ENCODE measurements at regions of chr6 and their contacts with region 1.

Region 1: GRCh38 chr6:125314019-125314581 is 12.3 kb upstream of the HDDC2 start:
- DNase-seq: peak in 1 of 2 donors; percentile 67
- ATAC-seq: peak; percentile 59 to 68 (median 67)
- H3K4me3 ChIP-seq: no peak overlapping the region
- H3K4me3 Mint-ChIP-seq: no peak overlapping the region
- H3K27ac ChIP-seq: no peak overlapping the region
- H3K27ac Mint-ChIP-seq: no peak overlapping the region
- H3K4me1 ChIP-seq: no peaks in the 10 kb centered on the region
- H3K4me1 Mint-ChIP-seq: peaks cover 0 to 4% of the 10 kb centered on the region in 2 donors
- H3K27me3 ChIP-seq: no peaks in the 10 kb centered on the region
- H3K27me3 Mint-ChIP-seq: peaks cover 10 to 20% of the 10 kb centered on the region in 2 donors
- CTCF ChIP-seq: peak; percentile 50

Region 2: GRCh38 chr6:125066964-125067363 is 247.1 kb before region 1 on chr6:
- intact Hi-C with region 1: no loop called
- DNase-seq: peak in 1 of 2 donors; percentile 61
- ATAC-seq: peak; percentile 81 to 99 (median 82)
- H3K4me3 ChIP-seq: no peak overlapping the region
- H3K4me3 Mint-ChIP-seq: no peak overlapping the region
- H3K27ac ChIP-seq: no peak overlapping the region
- H3K27ac Mint-ChIP-seq: no peak overlapping the region
- H3K4me1 ChIP-seq: peaks cover 11% of the 10 kb centered on the region
- H3K4me1 Mint-ChIP-seq: no peaks in the 10 kb centered on the region
- H3K27me3 ChIP-seq: no peaks in the 10 kb centered on the region
- H3K27me3 Mint-ChIP-seq: no peaks in the 10 kb centered on the region
- CTCF ChIP-seq: no peak

Region 3: DNA sequence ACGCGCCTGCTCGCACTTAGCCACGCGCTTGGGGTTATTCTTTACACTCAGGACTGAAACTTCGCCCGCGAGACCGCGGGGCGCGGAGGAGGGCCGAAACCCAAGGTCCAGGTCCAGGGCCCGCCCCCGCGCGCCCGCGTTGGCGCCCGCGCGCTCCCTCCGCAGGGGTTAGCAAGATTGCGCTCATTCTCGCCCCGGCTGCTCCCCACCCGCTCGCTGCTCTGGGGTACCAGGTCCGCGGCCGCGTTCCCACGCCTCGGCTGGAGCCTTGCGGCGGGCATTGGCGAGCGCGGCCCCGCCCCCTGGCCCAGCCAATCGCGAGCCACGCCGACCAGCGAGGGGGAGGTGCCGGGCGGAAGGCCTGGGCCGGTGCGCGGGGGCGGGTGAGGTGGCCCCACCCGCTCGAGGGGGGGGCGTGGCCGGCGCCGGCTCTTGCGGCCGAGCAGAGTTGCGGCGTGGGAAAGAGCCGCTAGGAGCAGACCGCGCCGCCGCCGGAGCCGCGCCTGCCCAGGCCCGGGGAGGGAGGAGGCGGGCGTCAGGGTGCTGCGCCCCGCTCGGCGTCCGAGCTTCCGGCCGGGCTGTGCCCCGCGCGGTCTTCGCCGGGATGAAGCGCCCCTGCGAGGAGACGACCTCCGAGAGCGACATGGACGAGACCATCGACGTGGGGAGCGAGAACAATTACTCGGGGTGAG is 435.2 kb after region 1 on chr6 and contains the start of gene HEY2:
- intact Hi-C with region 1: loop called (anchors 1 kb)
- DNase-seq: peak; percentile 85 to 89
- ATAC-seq: peak; percentile 81 to 93 (median 85)
- H3K4me3 ChIP-seq: peak within 1 kb of the TSS; percentile 76
- H3K4me3 Mint-ChIP-seq: peak within 1 kb of the TSS; percentile 94
- H3K27ac ChIP-seq: peak within 1 kb of the TSS; percentile 34
- H3K27ac Mint-ChIP-seq: peak within 1 kb of the TSS; percentile 83 to 89
- H3K4me1 ChIP-seq: peaks cover 29% of the 10 kb centered on the region
- H3K4me1 Mint-ChIP-seq: peaks cover 32 to 35% of the 10 kb centered on the region in 2 donors
- H3K27me3 ChIP-seq: peaks cover 52% of the 10 kb centered on the region
- H3K27me3 Mint-ChIP-seq: peaks cover 13 to 24% of the 10 kb centered on the region in 2 donors
- CTCF ChIP-seq: no peak
- total RNA-seq, gene HEY2: 0.66 to 0.93 (median 0.73) TPM

Region 4: GRCh38 chr6:125765944-125766343 is 451.8 kb after region 1 on chr6:
- intact Hi-C with region 1: loop called (anchors 1 kb)
- DNase-seq: no peak
- ATAC-seq: no peak
- H3K4me3 ChIP-seq: no peak overlapping the region
- H3K4me3 Mint-ChIP-seq: no peak overlapping the region
- H3K27ac ChIP-seq: no peak overlapping the region
- H3K27ac Mint-ChIP-seq: no peak overlapping the region
- H3K4me1 ChIP-seq: no peaks in the 10 kb centered on the region
- H3K4me1 Mint-ChIP-seq: no peaks in the 10 kb centered on the region
- H3K27me3 ChIP-seq: peaks cover 9% of the 10 kb centered on the region
- H3K27me3 Mint-ChIP-seq: peaks cover 29 to 65% of the 10 kb centered on the region in 2 donors
- CTCF ChIP-seq: no peak

Region 5: GRCh38 chr6:125858427-125859320 is 544.6 kb after region 1 on chr6:
- intact Hi-C with region 1: no loop called
- DNase-seq: peak in 1 of 2 donors; percentile 59
- ATAC-seq: peak in 2 of 3 donors; percentile 60 to 74
- H3K4me3 ChIP-seq: no peak overlapping the region
- H3K4me3 Mint-ChIP-seq: no peak overlapping the region
- H3K27ac ChIP-seq: no peak overlapping the region
- H3K27ac Mint-ChIP-seq: peak overlapping the region in 1 of 2 donors; percentile 69
- H3K4me1 ChIP-seq: no peaks in the 10 kb centered on the region
- H3K4me1 Mint-ChIP-seq: peaks cover 9 to 17% of the 10 kb centered on the region in 2 donors
- H3K27me3 ChIP-seq: no peaks in the 10 kb centered on the region
- H3K27me3 Mint-ChIP-seq: no peaks in the 10 kb centered on the region
- CTCF ChIP-seq: no peak

Region 6: GRCh38 chr6:125956506-125957390 is 642.6 kb after region 1 on chr6 and contains the start of gene HINT3:
- intact Hi-C with region 1: loop called (anchors 5 kb)
- DNase-seq: peak; percentile 96 to 99
- ATAC-seq: peak; percentile 89 to 98 (median 90)
- H3K4me3 ChIP-seq: peak within 1 kb of the TSS; percentile 99
- H3K4me3 Mint-ChIP-seq: no peak within 1 kb of the TSS
- H3K27ac ChIP-seq: peak within 1 kb of the TSS; percentile 100
- H3K27ac Mint-ChIP-seq: no peak within 1 kb of the TSS
- H3K4me1 ChIP-seq: peaks cover 8% of the 10 kb centered on the region
- H3K4me1 Mint-ChIP-seq: peaks cover 0 to 4% of the 10 kb centered on the region in 2 donors
- H3K27me3 ChIP-seq: no peaks in the 10 kb centered on the region
- H3K27me3 Mint-ChIP-seq: peaks cover 0 to 3% of the 10 kb centered on the region in 2 donors
- CTCF ChIP-seq: peak; percentile 98
- total RNA-seq, gene HINT3: 9.7 to 10.5 (median 10.3) TPM

Region 7: DNA sequence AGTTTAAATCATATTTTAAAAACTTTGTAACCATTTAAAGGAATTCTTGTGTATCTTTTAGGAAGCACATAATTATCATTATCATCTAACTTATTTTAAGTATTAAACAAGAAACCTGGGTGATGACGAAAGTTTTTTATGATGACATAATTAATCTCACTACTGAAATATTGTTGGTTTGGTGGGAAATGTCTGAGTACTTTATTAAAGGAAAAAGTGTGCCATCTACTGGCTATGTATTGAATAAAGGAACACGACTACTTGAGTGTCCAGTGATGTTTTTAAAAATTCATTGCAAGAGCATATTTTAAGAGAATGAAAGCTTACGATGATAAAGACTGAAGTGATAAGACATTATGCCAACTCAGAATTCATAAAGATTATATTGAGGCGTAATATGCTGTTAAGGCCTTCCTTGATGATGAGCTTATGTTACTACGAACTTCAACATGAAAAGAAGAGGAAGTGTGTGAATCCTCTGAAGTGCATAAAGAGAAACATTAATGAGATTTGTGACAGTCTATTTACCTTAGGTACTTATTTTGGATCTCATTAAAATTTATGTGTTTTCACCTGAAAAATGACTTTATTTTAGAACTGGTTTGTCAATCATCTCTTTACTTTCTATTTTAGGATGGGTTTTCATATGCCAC is 660.2 kb after region 1 on chr6:
- intact Hi-C with region 1: loop called (anchors 2 kb)
- DNase-seq: peak in 1 of 2 donors; percentile 67
- ATAC-seq: peak; percentile 59 to 73 (median 69)
- H3K4me3 ChIP-seq: no peak overlapping the region
- H3K4me3 Mint-ChIP-seq: no peak overlapping the region
- H3K27ac ChIP-seq: no peak overlapping the region
- H3K27ac Mint-ChIP-seq: peak overlapping the region; percentile 33 to 45
- H3K4me1 ChIP-seq: no peaks in the 10 kb centered on the region
- H3K4me1 Mint-ChIP-seq: peaks cover 5 to 7% of the 10 kb centered on the region in 2 donors
- H3K27me3 ChIP-seq: no peaks in the 10 kb centered on the region
- H3K27me3 Mint-ChIP-seq: no peaks in the 10 kb centered on the region
- CTCF ChIP-seq: peak; percentile 45

Measured in natural killer cell (primary cell).